ENCODE measurements at regions of chr18 and their contacts with region 1.

Region 1: DNA sequence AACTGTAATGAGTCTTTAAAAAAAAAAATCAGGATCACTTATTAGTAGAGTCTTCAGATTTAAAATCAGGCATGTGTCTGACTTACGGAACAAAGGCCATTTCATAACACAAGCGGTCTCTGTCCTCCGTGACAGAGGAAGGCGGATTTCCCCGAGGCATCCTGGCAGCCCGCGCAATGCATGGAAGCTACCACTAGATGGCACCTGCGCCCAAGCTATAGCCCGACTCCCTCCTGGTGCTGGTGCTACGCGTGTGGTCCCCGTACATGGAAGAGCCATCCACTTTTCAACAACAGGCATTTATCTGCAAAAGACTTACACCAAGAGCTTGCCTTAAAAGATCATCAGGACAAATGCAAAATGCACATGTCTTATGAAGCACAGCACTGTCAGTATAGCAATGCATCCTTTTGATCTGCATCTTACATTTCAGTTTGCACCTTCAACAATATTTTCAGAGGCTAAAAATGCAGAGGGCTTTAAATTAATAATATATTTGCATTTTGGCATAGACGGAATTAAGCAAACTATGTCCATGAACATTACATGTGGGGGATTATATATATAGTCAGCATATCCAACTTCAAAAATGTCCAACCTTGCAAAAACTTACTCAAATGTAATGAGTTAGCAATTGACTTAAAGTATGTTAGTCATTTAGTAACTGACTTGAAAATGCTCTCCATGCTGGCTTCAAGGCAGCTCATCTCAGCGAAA is 96.0 kb downstream of the ZNF516 start:
- DNase-seq: peak; percentile 49
- H3K4me3 ChIP-seq: no peak overlapping the region
- H3K27ac ChIP-seq: no peak overlapping the region
- H3K27me3 ChIP-seq: no peaks in the 10 kb centered on the region
- CTCF ChIP-seq: peak; percentile 99

Region 2: DNA sequence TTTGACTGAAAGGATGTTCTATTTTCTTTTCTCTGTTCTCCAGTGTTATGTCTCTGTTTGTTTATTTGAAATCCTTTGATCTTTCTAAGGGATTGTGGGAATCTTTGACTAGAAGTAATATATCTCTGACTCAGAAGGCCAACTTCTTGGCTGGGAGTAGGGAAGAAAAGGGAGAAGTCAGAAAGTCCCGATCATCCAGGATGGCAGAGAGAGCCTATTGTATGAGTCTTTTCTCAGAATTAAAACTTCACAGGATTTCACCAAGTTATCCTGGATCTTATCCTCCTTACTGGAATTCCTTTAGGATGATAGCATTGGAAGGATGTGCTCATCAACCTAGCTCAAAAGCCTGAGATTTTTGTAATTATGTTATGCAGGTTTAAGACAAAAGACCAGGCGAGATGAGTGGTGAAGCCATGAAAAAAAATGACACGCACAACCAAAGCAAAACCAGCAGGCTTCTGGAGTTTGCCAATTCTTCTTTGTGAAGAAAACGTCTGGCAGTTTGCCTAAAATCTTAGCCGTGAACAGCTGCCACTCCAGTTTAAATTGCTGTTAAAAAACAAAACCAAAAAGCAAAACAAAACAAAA is 588.0 kb before region 1 on chr18:
- CTCF ChIA-PET with region 1: no interaction called
- POLR2A ChIA-PET with region 1: no interaction called
- DNase-seq: no peak
- H3K4me3 ChIP-seq: no peak overlapping the region
- H3K27ac ChIP-seq: no peak overlapping the region
- H3K27me3 ChIP-seq: peaks cover 3% of the 10 kb centered on the region
- CTCF ChIP-seq: no peak

Region 3: DNA sequence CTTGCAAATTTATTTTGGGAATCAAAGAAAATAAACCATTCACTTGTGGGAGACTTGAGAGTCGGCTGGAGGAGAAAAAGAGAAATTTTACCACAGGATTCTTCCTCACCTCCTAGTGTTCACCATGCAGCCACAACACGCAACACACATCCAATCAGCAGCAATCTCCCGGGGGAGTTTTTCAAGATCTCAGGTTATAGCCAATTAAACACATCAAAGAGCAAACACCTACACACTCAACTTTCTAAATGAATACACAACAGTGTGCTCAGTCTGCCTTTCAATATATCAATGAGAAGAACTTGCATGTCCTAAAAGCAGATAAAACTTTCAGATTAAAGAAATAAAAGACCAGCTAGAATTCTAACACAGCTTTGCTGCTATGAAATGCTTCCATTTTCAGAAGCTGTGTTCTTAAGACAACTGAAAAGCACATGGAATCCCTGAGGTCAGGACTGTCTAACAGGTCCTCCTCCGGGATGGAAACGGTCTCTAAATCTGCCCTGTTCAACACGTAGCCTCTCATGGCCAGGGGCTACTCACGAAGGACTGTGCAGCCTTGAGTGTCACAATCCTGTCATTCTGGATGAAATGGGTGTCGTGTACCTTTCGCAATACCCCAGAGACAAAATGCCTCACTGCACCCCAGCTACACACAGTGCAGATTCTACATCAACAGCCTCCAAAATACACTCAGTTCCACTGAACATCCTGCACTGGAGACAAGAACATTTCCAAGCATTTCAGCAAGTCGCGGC is 11.8 kb after region 1 on chr18:
- CTCF ChIA-PET with region 1: interaction called, 34 read pairs
- POLR2A ChIA-PET with region 1: no interaction called
- DNase-seq: no peak
- H3K4me3 ChIP-seq: no peak overlapping the region
- H3K27ac ChIP-seq: no peak overlapping the region
- H3K27me3 ChIP-seq: no peaks in the 10 kb centered on the region
- CTCF ChIP-seq: no peak

Region 4: GRCh38 chr18:76620321-76621170 is 221.5 kb after region 1 on chr18:
- CTCF ChIA-PET with region 1: interaction called, 63 read pairs
- POLR2A ChIA-PET with region 1: no interaction called
- DNase-seq: peak; percentile 42
- H3K4me3 ChIP-seq: peak overlapping the region; percentile 36; the same call in 1 of the 2 replicates
- H3K27ac ChIP-seq: peak overlapping the region; percentile 68
- H3K27me3 ChIP-seq: peaks cover 2% of the 10 kb centered on the region
- CTCF ChIP-seq: peak; percentile 77

Region 5: DNA sequence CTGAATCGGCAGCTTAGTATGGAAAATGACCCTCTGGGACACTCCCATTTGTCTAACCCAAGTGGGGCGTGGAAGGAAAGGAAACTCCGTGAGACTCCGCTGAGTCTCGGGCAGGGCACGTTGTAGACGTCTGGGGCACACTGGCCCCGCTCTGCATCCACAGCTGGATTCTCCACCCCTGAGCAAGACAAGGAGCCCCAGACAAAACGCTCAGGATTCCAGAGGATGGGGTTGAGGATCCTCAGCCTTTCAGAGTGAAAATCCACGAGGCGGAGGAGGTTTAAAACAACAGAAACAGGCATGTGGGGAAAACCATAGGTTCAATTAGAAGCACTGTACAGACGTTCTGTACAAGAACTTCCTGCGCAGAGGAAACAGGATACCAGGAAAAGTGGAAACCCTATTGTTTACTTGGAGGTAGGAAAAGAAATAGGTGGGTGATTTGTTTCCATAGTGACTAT is 298.4 kb after region 1 on chr18:
- CTCF ChIA-PET with region 1: interaction called, 11 read pairs
- POLR2A ChIA-PET with region 1: no interaction called
- DNase-seq: no peak
- H3K4me3 ChIP-seq: no peak overlapping the region; the same call in 1 of the 2 replicates
- H3K27ac ChIP-seq: no peak overlapping the region
- H3K27me3 ChIP-seq: peaks cover 8% of the 10 kb centered on the region
- CTCF ChIP-seq: no peak

Measured in AG04450 (cell line).